HEK293 (cell line): ENCODE measurements at regions of chr2 and their contacts with region 1.

Region 1: DNA sequence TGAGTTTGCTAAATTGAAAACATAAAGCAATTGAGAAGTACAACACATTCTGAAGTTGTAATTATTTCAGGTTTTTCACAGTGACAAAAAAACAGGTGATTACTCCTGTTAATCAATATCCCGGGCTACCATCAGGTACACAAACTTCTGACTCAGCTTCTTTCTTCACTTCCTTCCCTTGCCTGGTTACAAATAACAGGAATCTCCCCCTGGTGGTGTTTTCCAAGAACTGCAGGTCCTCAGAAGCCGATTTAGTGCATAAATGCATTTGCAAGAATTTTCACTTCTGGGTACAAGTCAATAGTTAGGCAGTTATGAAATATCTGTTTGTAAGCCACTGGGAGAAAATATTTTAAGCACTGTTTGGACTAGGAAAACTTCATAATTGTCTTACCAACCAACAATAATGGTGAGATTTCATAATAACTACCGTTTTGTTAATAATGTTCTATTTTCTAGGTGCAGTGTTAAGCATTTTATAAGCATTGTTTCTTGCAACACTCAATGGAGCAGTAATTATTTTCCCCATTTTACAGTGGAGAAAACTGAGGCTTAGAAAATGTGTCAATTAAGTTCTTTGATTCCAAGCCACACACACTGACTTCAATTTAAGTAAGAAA is 12.4 kb upstream of the GMCL1 start:
- H3K4me3 ChIP-seq: no peak overlapping the region
- H3K27ac ChIP-seq: no peak overlapping the region
- H3K4me1 ChIP-seq: peaks cover 7% of the 10 kb centered on the region
- CTCF ChIP-seq: 0 out of 2 replicates have a peak, but pooled peaks have one; percentile 44

Region 2: DNA sequence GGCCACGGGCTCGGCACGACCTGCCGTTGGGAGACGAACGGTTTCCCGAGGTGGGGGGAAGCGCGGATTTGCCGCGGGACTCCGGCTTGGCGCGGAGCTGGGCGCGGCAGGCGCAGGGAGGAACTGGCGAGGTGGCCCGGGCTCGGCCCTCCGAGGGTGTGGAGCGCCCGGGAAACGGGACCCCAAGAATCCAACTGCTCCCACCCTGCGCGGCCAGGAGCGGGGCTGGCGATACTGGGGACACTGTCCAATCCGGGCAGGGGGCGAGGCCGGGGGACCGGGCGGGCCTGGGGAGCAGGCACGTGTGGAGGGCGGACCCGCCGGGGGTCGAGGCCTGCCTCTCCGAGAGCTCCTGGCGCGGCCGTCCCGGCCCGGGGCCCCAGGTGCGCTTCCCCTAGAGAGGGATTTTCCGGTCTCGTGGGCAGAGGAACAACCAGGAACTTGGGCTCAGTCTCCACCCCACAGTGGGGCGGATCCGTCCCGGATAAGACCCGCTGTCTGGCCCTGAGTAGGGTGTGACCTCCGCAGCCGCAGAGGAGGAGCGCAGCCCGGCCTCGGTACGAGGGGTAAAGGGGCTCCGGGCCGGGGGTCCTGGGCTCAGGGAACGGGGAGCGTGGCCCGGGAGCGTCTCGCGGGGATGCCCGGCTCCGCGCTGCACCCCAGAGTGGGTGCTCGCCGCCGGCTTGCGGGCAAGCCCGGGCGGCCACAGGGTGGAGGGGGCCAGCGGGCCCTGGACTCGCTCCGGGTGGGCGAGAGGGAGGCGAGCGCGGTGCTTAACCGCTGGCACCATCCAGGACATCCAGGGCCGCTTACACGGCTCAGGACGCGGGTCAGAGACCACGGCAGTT is 75.2 kb before region 1 on chr2 and contains the start of gene ANXA4:
- CTCF ChIA-PET with region 1: interaction called, 14 read pairs
- POLR2A ChIA-PET with region 1: interaction called, 4 read pairs
- H3K4me3 ChIP-seq: peak within 1 kb of the TSS; percentile 70
- H3K27ac ChIP-seq: peak within 1 kb of the TSS; percentile 85
- H3K4me1 ChIP-seq: peaks cover 9% of the 10 kb centered on the region
- CTCF ChIP-seq: 0 out of 2 replicates have a peak, but pooled peaks have one; percentile 32

Region 3: DNA sequence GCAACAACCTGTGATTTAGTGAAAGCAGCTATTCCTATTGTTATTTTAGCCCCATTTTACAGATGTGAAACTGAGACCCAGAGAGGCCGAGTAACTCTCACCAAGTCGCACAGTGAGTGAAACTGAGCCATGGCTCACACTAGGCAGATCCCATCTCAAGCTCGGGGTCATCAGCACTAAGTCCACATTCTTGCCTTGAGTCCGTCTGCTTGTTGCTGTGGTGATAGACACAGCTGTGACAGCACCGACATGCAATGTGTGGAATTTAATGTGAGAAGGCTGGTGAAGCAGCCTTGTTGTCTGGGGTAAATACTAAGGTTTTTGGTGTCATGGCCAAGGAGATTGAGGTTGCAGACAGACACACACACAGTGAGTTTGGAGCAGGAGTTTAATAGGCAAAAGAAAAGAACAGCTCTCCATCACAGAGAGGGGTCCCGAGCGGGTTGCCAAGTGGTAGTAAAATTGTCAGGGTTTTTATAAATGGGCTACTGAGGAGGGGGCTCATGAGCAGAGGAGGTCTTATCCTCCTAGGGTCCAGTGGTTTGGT is 27.8 kb before region 1 on chr2:
- CTCF ChIA-PET with region 1: interaction called, 20 read pairs
- POLR2A ChIA-PET with region 1: no interaction called
- H3K4me3 ChIP-seq: no peak overlapping the region
- H3K27ac ChIP-seq: no peak overlapping the region
- H3K4me1 ChIP-seq: 0 out of 2 replicates have a peak, but pooled peaks cover 4% of the 10 kb centered on the region
- CTCF ChIP-seq: no peak

Region 4: DNA sequence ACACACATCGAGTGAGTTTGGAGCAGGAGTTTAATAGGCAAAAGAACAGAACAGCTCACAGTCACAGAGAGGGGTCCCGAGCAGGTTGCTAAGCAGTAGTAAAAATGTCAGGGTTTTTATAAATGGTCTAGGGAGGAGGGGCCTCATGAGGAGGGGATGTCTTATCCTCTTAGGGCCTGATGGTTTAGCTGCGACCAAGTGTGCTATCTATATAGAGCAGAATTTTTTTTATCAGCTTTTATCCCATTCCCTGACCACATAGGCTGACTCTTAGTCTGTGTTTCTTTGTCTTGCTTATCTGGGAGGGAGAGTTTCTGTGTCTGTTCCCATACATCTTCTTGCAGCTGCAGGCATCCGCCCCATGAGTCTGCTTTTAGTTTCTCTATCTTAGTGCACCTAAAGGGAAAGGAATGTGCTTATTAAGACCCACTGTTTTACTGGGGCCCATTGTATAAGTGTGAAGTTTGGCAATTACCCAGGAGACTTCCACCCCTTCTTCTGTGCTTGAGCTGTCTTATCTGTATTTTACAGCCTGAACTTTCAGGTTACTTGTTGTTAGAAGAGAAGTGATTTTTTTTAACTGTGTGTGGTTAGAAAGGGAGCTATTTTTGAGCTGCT is 18.0 kb before region 1 on chr2:
- CTCF ChIA-PET with region 1: interaction called, 92 read pairs
- POLR2A ChIA-PET with region 1: interaction called, 3 read pairs
- H3K4me3 ChIP-seq: peak overlapping the region; percentile 21
- H3K27ac ChIP-seq: peak overlapping the region; percentile 29; the same call in 1 of the 2 replicates
- H3K4me1 ChIP-seq: peaks cover 12% of the 10 kb centered on the region
- CTCF ChIP-seq: no peak

Region 5: GRCh38 chr2:69827796-69828540 is 10.9 kb after region 1 on chr2:
- CTCF ChIA-PET with region 1: interaction called, 13 read pairs
- POLR2A ChIA-PET with region 1: no interaction called
- H3K4me3 ChIP-seq: no peak overlapping the region
- H3K27ac ChIP-seq: no peak overlapping the region; the same call in 1 of the 2 replicates
- H3K4me1 ChIP-seq: no peaks in the 10 kb centered on the region; the same call in 1 of the 2 replicates
- CTCF ChIP-seq: no peak

Region 6: GRCh38 chr2:70086838-70087701 is 270.0 kb after region 1 on chr2 and contains the start of gene PCBP1:
- CTCF ChIA-PET with region 1: no interaction called
- POLR2A ChIA-PET with region 1: no interaction called
- H3K4me3 ChIP-seq: peak within 1 kb of the TSS; percentile 70
- H3K27ac ChIP-seq: peak within 1 kb of the TSS; percentile 100
- H3K4me1 ChIP-seq: peaks cover 11% of the 10 kb centered on the region
- CTCF ChIP-seq: no peak